ENCODE measurements at regions of chr14 and their contacts with region 1.

Region 1: GRCh38 chr14:34722717-34723545 is 8.5 kb upstream of the CFL2 start:
- DNase-seq: no peak
- ATAC-seq: peak; percentile 79 to 95 (median 93)
- H3K4me3 ChIP-seq: no peak overlapping the region
- H3K27ac ChIP-seq: no peak overlapping the region
- H3K4me1 ChIP-seq: peaks cover 0 to 3% (median 0%) of the 10 kb centered on the region in 4 donors
- H3K27me3 ChIP-seq: no peaks in the 10 kb centered on the region
- CTCF ChIP-seq: peak; percentile 79 to 85 (median 82)
- POLR2A ChIP-seq: no peak

Region 2: GRCh38 chr14:34671716-34672115 is 51.2 kb before region 1 on chr14:
- intact Hi-C with region 1: loop called (anchors 5 to 10 kb)
- DNase-seq: no peak
- ATAC-seq: peak in 2 of 4 donors; percentile 24 to 30
- H3K4me3 ChIP-seq: no peak overlapping the region
- H3K27ac ChIP-seq: no peak overlapping the region
- H3K4me1 ChIP-seq: peaks cover 0 to 4% (median 0%) of the 10 kb centered on the region in 4 donors
- H3K27me3 ChIP-seq: no peaks in the 10 kb centered on the region
- CTCF ChIP-seq: no peak
- POLR2A ChIP-seq: no peak

Region 3: DNA sequence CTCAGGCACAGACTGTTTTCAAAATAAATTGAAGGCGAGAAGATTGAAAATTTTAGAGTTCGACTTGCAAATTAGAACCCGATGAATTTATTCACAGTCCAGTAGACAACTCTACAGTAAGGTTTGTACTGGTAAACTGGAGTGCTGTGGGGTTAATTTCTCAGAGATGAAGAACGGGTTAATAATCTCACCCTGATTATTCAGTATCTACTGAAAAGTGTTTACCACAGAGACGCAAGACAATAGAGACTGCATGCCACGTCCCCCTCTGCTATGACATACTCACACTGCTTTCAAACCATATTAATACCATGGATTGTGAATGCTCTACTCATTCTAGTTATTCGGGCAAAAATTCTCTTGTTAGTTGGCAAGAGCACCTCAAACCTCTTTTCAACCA is 44.6 kb before region 1 on chr14:
- intact Hi-C with region 1: loop called (anchors 5 to 10 kb)
- DNase-seq: no peak
- ATAC-seq: no peak
- H3K4me3 ChIP-seq: no peak overlapping the region
- H3K27ac ChIP-seq: no peak overlapping the region
- H3K4me1 ChIP-seq: peaks cover 0 to 15% (median 0%) of the 10 kb centered on the region in 4 donors
- H3K27me3 ChIP-seq: no peaks in the 10 kb centered on the region
- CTCF ChIP-seq: no peak
- POLR2A ChIP-seq: no peak

Region 4: DNA sequence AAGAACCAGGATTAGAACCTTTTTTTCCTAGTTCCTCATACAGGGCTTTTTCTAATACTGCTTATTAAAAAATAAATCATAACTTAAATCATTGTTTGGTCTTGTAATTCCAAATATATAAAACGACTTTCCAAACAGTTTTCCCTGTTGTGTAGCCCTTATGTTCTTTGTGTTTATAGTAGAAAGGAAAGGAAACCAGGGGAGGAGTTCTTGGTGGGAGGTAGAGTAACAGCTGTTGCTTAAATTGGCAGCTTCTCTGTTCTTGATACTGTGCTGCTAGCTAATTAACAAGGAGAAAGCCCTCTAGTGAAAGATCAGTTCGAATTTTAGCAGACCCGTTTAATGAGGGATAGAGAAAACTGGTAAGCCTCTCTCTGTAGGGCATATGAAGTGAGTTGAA is 274.8 kb after region 1 on chr14:
- intact Hi-C with region 1: no loop called
- DNase-seq: no peak
- ATAC-seq: no peak
- H3K4me3 ChIP-seq: no peak overlapping the region
- H3K27ac ChIP-seq: peak overlapping the region in 1 of 3 donors; percentile 6
- H3K4me1 ChIP-seq: peaks cover 0 to 49% (median 11%) of the 10 kb centered on the region in 4 donors
- H3K27me3 ChIP-seq: no peaks in the 10 kb centered on the region
- CTCF ChIP-seq: no peak
- POLR2A ChIP-seq: no peak